ENCODE measurements at regions of chr11 and their contacts with region 1.

Region 1: GRCh38 chr11:70623906-70624597 is 225.7 kb downstream of the CTTN start:
- DNase-seq: no peak
- H3K4me3 ChIP-seq: no peak overlapping the region
- H3K4me3 Mint-ChIP-seq: no peak overlapping the region
- H3K27ac Mint-ChIP-seq: no peak overlapping the region
- H3K4me1 ChIP-seq: no peaks in the 10 kb centered on the region
- H3K4me1 Mint-ChIP-seq: no peaks in the 10 kb centered on the region
- H3K27me3 ChIP-seq: no peaks in the 10 kb centered on the region
- H3K27me3 Mint-ChIP-seq: no peaks in the 10 kb centered on the region
- CTCF ChIP-seq: no peak

Region 2: DNA sequence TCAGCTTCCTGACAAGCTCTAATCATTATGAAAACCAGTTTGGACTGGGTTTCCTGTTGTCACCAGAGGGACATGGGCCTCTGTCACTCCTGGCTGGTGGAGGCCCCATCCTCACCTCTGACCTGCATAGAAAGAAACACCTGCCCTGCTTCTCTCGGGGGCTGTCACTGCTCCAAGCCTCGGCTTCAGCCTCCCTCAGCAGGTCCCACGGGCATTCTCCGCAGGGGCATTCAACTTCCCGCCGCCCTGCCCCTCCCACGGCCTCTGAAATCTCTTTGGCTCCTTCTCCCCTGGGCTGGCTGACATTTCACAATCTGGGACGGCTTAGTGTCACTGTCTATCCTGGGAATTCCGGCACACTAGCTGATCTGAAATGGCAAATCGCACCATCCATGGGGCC is 32.2 kb after region 1 on chr11:
- CTCF ChIA-PET with region 1: no interaction called
- POLR2A ChIA-PET with region 1: no interaction called
- intact Hi-C with region 1: loop called (anchors 1 kb)
- DNase-seq: peak; percentile 31 to 69
- H3K4me3 ChIP-seq: no peak overlapping the region
- H3K4me3 Mint-ChIP-seq: no peak overlapping the region
- H3K27ac Mint-ChIP-seq: peak overlapping the region; percentile 55
- H3K4me1 ChIP-seq: peaks cover 18% of the 10 kb centered on the region
- H3K4me1 Mint-ChIP-seq: peaks cover 21% of the 10 kb centered on the region
- H3K27me3 ChIP-seq: no peaks in the 10 kb centered on the region
- H3K27me3 Mint-ChIP-seq: no peaks in the 10 kb centered on the region
- CTCF ChIP-seq: no peak

Region 3: GRCh38 chr11:70901951-70902521 is 278.0 kb after region 1 on chr11:
- CTCF ChIA-PET with region 1: no interaction called
- POLR2A ChIA-PET with region 1: no interaction called
- intact Hi-C with region 1: no loop called
- DNase-seq: no peak
- H3K4me3 ChIP-seq: no peak overlapping the region
- H3K4me3 Mint-ChIP-seq: no peak overlapping the region
- H3K27ac Mint-ChIP-seq: no peak overlapping the region
- H3K4me1 ChIP-seq: no peaks in the 10 kb centered on the region
- H3K4me1 Mint-ChIP-seq: no peaks in the 10 kb centered on the region
- H3K27me3 ChIP-seq: no peaks in the 10 kb centered on the region
- H3K27me3 Mint-ChIP-seq: no peaks in the 10 kb centered on the region
- CTCF ChIP-seq: no peak